Naive thymus-derived CD4-positive, alpha-beta T cell (primary cell): ENCODE measurements at regions of chr4 and their contacts with region 1.

Region 1: GRCh38 chr4:60865273-60865672 is 334.9 kb upstream of the ADGRL3 start:
- DNase-seq: no peak
- ATAC-seq: no peak
- H3K4me3 ChIP-seq: no peak overlapping the region
- H3K4me3 Mint-ChIP-seq: no peak overlapping the region
- H3K27ac ChIP-seq: no peak overlapping the region
- H3K27ac Mint-ChIP-seq: no peak overlapping the region
- H3K4me1 ChIP-seq: no peaks in the 10 kb centered on the region
- H3K4me1 Mint-ChIP-seq: no peaks in the 10 kb centered on the region
- H3K27me3 ChIP-seq: no peaks in the 10 kb centered on the region
- H3K27me3 Mint-ChIP-seq: no peaks in the 10 kb centered on the region

Region 2: DNA sequence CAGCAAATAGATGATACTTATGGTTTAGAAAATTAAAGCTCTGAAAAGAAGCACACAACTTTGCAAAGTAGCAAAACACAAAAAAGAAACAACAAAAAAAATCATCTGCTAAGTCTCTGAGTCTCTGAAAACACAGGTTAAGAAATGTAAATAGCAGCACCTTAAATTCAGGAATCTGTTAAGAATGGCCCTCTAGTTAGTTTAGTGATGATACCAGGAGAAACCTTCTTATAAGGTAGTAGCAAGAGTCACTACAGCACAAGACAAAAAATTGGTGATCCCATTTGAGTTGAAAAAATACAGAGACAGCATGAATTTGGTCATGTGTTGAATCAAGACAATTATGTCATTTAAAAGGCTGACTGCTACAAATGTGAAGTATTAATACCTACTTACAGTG is 26.7 kb after region 1 on chr4:
- CTCF ChIA-PET with region 1: no interaction called
- POLR2A ChIA-PET with region 1: interaction called, 12 read pairs
- intact Hi-C with region 1: no loop called
- DNase-seq: no peak
- ATAC-seq: no peak
- H3K4me3 ChIP-seq: no peak overlapping the region
- H3K4me3 Mint-ChIP-seq: no peak overlapping the region
- H3K27ac ChIP-seq: no peak overlapping the region
- H3K27ac Mint-ChIP-seq: no peak overlapping the region
- H3K4me1 ChIP-seq: no peaks in the 10 kb centered on the region
- H3K4me1 Mint-ChIP-seq: no peaks in the 10 kb centered on the region
- H3K27me3 ChIP-seq: no peaks in the 10 kb centered on the region
- H3K27me3 Mint-ChIP-seq: no peaks in the 10 kb centered on the region